ENCODE measurements at regions of chr11 and their contacts with region 1.

Region 1: DNA sequence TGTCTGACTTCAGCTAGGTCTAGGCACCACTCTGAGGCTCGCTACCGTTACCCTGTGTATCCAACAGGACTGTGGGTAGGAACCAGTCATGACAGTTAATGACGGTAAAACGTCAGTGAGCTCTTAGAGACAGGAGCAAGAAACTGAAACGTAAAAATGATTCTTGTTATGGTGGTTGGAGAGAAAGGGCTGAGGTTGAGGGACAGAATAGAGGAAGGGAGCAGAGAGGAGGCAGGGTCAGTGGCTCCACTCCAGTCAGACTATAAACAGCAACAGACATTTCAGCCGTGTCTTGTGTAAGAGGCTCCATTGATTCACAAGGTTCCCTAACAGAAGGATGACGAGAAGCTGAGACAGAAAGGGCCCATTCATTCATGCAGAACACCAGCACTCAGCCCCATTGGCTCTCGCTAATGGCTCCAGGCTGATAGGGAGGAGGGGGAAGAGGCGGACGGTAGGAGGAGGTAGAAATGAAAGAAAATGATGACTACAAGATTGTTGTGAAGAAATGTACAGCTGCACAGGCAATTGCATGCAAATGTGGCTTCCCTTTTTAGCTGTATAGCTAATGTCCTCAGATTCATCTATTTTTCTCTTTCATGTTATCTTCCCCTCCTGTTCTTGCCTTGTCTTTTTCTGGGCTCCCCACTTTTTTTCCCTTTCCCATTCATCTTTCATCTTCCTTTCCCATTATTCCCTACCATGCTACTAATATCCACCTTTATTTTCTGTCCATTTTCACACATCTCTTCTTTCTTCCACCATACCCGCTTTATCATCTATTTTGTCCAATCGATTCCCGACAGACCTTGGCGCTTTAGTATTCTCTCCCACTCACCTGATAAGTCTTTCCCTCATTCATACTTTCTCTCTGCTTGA is 34.3 kb downstream of the ETS1 start:
- DNase-seq: no peak
- ATAC-seq: peak; percentile 47 to 73 (median 56)
- H3K4me3 ChIP-seq: no peak overlapping the region
- H3K27ac ChIP-seq: no peak overlapping the region
- H3K4me1 ChIP-seq: peaks cover 11% of the 10 kb centered on the region
- H3K27me3 ChIP-seq: no peaks in the 10 kb centered on the region
- CTCF ChIP-seq: no peak

Region 2: DNA sequence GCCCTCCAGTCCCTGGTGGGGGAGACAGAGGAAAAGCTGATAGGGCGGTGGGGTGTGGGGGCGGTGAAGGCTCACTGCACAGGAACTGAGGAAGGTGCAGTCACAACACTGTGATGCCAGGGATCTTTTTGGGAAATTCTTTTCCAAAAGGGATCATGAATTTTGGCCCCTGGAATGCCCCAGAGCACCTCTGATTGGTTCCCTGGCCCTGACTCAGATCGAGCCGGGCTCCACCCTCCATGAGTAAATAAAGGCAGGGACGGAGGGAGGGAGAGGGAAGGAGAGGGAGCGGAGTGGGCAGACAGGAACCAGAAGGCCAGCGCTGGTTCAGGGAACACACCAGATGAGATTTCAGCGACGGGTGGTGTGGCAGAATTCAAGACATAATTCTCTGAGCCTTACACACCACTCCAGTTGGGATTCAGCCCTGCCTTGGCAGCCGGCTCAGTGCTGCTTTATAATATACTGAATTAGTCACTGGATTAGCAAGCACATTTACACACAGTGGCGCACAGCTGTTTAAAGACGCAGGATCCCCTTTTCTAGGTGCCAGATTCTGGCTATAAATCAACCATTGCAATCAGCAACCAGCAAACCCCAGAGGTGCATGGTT is 45.9 kb before region 1 on chr11:
- intact Hi-C with region 1: no loop called
- DNase-seq: peak; percentile 90 to 96
- ATAC-seq: peak; percentile 92 to 96 (median 94)
- H3K4me3 ChIP-seq: peak overlapping the region; percentile 52
- H3K27ac ChIP-seq: peak overlapping the region; percentile 80
- H3K4me1 ChIP-seq: peaks cover 85% of the 10 kb centered on the region
- H3K27me3 ChIP-seq: no peaks in the 10 kb centered on the region
- CTCF ChIP-seq: no peak

Region 3: GRCh38 chr11:128624269-128625175 is 71.5 kb after region 1 on chr11:
- intact Hi-C with region 1: loop called in 1 of 2 experiments (anchors 5 kb)
- DNase-seq: peak in 1 of 2 donors; percentile 61
- ATAC-seq: peak; percentile 66 to 80 (median 74)
- H3K4me3 ChIP-seq: no peak overlapping the region
- H3K27ac ChIP-seq: no peak overlapping the region
- H3K4me1 ChIP-seq: no peaks in the 10 kb centered on the region
- H3K27me3 ChIP-seq: no peaks in the 10 kb centered on the region
- CTCF ChIP-seq: no peak